HEK293T (cell line): ENCODE measurements at regions of chr1 and their contacts with region 1.

Region 1: GRCh38 chr1:231757101-231757404 is 130.5 kb downstream of the DISC1 start:
- DNase-seq: no peak

Region 2: DNA sequence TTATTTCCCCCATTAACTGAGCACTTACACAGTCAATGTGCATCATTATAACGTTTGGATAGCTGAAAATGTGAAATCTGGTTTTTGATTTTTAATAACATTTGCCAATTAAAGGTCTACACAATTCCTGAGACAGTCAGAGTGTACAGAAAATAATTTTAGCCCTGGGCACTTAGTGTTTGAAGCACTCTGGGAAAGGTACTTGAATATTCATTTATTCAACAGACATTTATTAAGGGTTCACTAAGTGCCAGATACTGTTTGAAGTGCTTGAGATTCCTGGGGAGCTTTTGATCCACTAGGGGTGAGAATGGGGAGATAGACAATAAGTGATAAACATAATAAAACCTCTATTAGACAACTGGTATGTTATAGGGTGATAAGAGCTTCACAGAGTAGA is 11.4 kb after region 1 on chr1:
- CTCF ChIA-PET with region 1: interaction called, 30 read pairs
- POLR2A ChIA-PET with region 1: no interaction called
- DNase-seq: no peak

Region 3: GRCh38 chr1:231806623-231807495 is 49.8 kb after region 1 on chr1:
- CTCF ChIA-PET with region 1: interaction called, 16 read pairs
- POLR2A ChIA-PET with region 1: no interaction called
- DNase-seq: peak; percentile 87